ENCODE measurements at regions of chr2 and their contacts with region 1.

Region 1: GRCh38 chr2:231604685-231605606 is 12.3 kb downstream of the TEX44 start:
- DNase-seq: peak; percentile 99
- H3K4me3 Mint-ChIP-seq: peak overlapping the region; percentile 67
- H3K27ac Mint-ChIP-seq: peak overlapping the region; percentile 78
- H3K4me1 Mint-ChIP-seq: peaks cover 10% of the 10 kb centered on the region
- H3K27me3 Mint-ChIP-seq: peaks cover 7% of the 10 kb centered on the region

Region 2: GRCh38 chr2:231514103-231514950 is 90.6 kb before region 1 on chr2:
- intact Hi-C with region 1: loop called (anchors 1 kb)
- DNase-seq: peak; percentile 99
- H3K4me3 Mint-ChIP-seq: peak overlapping the region; percentile 94
- H3K27ac Mint-ChIP-seq: peak overlapping the region; percentile 97
- H3K4me1 Mint-ChIP-seq: peaks cover 13% of the 10 kb centered on the region
- H3K27me3 Mint-ChIP-seq: peaks cover 6% of the 10 kb centered on the region

Region 3: DNA sequence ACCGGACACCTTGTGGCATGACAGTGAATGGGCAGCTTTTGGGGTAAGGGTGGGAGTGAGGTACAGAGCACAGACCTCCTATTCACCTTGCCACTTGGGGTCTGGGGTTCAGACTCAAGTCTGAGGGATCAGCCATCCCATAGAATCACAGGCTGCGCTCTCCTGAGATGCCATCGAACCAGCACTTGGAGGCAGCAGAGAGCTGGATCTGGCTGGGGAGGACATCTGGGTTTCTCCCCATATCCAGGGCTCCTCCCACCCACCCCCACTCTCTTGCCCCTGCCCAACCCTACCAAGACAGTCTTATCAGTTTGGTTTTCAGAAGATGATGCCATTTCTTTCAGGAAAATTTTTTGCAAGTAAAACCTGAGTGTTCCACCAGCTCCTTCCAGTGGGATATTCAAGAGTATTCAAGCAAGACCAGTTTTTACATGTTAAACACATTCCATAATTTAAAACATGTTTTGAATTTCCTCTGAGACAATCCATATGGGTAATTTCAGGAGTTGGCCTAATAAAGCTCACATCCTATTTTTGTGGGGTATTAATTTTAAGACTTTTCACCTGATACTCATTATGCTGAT is 41.5 kb before region 1 on chr2:
- intact Hi-C with region 1: loop called (anchors 1 kb)
- DNase-seq: peak; percentile 80
- H3K4me3 Mint-ChIP-seq: no peak overlapping the region
- H3K27ac Mint-ChIP-seq: no peak overlapping the region
- H3K4me1 Mint-ChIP-seq: peaks cover 2% of the 10 kb centered on the region
- H3K27me3 Mint-ChIP-seq: peaks cover 2% of the 10 kb centered on the region